ENCODE measurements at regions of chr13 and their contacts with region 1.

Region 1: DNA sequence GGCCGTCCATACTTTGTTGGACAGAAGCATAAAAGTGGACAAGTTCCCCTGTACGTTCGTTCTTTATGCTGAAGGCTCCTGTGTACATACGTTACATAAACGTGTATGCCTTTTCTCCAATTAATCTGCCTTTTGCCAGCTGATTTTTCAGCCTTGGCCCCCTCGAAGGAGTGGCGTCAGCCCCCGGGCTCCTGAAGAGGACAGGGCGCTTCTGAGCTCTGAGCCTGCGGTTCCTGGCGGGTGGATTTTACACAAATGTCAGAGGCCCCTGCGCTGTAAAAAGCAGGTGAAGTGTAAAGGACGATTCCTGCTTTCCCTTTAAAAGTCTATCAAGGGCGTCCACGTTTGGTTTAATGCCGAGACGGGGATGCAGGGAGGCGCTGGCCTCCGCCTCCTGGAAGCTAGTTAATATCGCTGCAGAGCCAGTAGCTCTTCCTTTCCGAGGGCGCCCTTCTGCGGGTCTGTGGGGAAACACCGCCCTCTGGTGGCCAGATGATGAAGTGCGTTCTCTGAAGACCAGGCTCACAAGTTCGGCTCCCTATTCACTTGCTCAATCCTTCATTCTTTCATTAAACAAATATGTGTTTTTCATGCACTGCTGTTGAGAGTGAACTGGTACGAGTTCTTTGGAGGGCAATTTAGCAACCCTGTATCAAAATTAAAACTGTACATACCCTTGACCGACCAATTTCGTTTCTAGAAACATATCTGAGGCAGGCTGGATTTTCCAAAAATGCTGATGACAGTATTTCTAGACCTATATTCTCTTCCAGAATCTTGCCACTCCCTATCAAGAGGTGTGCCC is 62.0 kb downstream of the GPR12 start:
- DNase-seq: peak; percentile 89 to 95
- H3K4me3 ChIP-seq: peak overlapping the region in 2 of 4 donors; percentile 9 to 17
- H3K27ac ChIP-seq: no peak overlapping the region
- H3K4me1 ChIP-seq: peaks cover 0 to 8% (median 4%) of the 10 kb centered on the region in 4 donors
- H3K27me3 ChIP-seq: peaks cover 0 to 1% (median 0%) of the 10 kb centered on the region in 3 donors
- CTCF ChIP-seq: peak in 6 of 7 experiments; percentile 69 to 97 (median 94)
- EP300 ChIP-seq: no peak
- POLR2A ChIP-seq: no peak

Region 2: GRCh38 chr13:26485786-26486185 is 212.8 kb before region 1 on chr13:
- intact Hi-C with region 1: loop called (anchors 5 kb)
- DNase-seq: no peak
- H3K4me3 ChIP-seq: no peak overlapping the region
- H3K27ac ChIP-seq: peak overlapping the region in 1 of 5 donors; percentile 32
- H3K4me1 ChIP-seq: peaks cover 0 to 4% (median 0%) of the 10 kb centered on the region in 4 donors
- H3K27me3 ChIP-seq: no peaks in the 10 kb centered on the region
- CTCF ChIP-seq: no peak
- EP300 ChIP-seq: no peak
- POLR2A ChIP-seq: no peak